Cardiac septum (tissue), 1 donor: ENCODE measurements at regions of chr9 and their contacts with region 1.

Region 1: DNA sequence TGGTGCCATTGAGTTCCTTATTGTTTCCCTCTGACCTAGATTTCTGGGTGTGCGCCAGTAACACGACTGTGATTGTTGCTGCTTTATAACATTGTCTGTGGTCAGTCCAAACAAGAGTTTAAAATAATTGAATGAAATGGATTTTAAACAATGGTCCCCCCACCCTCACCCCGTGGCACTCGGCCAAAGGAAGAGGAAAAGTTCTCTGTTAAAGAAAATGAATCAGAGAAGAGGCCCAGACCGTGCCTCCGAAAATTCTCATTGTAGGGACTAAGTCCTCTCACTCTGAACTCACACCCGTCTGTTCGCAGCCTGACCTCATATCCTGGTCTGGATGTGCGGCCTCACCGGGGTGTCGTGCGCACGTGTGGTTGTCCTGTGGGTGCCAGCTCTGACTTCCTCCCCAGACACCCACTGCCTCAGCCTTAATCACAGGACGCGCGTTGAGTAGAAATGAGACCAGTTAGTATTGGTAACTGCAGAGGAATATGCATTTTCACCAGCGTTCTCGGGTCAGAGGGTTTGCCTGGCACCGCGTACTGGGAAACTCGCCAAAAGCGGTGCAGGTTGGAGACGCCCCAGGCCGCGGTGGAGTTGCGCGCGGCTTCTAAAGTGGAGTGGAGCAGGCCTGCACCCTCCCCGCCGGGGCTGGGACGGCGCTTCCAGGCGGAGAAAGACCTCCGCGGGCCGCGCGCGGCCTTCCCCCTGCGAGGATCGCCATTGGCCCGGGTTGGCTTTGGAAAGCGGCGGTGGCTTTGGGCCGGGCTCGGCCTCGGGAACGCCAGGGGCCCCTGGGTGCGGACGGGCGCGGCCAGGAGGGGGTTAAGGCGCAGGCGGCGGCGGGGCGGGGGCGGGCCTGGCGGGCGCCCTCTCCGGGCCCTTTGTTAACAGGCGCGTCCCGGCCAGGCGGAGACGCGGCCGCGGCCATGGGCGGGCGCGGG is at the start of gene ABL1:
- DNase-seq: peak; percentile 82
- total RNA-seq, gene ABL1: 38.0 TPM

Region 2: GRCh38 chr9:130712564-130713285 is 121.9 kb before region 1 on chr9:
- intact Hi-C with region 1: loop called (anchors 10 kb)
- DNase-seq: peak; percentile 99

Region 3: GRCh38 chr9:130780865-130781504 is 53.7 kb before region 1 on chr9:
- intact Hi-C with region 1: loop called (anchors 5 kb)
- DNase-seq: no peak